Mammary epithelial cell (primary cell): ENCODE measurements at regions of chr5 and their contacts with region 1.

Region 1: GRCh38 chr5:71601222-71602041 is 14.3 kb downstream of the MCCC2 start:
- DNase-seq: peak; percentile 98
- H3K4me3 ChIP-seq: peak overlapping the region in 1 of 3 experiments; percentile 7
- H3K27ac ChIP-seq: peak overlapping the region; percentile 18
- H3K4me1 ChIP-seq: peaks cover 26% of the 10 kb centered on the region
- H3K27me3 ChIP-seq: no peaks in the 10 kb centered on the region
- CTCF ChIP-seq: peak; percentile 72 to 73

Region 2: DNA sequence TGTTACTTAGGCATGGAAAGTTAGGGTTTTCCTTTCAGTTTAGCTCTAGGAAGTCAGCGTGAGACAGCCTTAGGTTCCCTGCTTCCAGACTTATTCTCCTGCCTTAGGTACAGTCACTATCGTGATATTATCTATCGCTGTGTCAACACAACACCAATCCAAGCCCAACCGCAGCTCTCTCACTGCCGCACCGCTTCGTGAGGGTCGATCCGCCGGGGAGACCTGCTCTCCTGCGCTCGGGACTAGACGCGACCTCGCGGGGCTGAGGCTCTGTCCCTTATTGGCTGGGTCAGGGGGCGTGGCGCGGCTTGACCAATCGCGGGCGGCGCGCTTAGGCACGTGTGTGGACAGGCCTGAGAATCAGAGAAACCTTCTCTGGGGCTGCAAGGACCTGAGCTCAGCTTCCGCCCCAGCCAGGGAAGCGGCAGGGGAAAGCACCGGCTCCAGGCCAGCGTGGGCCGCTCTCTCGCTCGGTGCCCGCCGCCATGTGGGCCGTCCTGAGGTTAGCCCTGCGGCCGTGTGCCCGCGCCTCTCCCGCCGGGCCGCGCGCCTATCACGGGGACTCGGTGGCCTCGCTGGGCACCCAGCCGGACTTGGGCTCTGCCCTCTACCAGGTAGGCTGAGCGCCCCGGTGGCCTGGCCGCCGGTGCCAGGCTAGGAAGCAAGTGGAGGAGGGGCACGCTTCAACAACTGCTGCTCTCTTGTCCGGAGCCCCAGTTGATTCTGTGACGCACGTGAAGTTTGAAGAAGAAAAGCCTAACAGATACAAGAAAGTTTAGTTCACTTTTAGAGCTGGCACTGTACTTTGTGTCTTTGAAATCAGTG is 14.3 kb before region 1 on chr5 and contains the start of gene MCCC2:
- CTCF ChIA-PET with region 1: interaction called, 21 read pairs
- dilution Hi-C with region 1: no loop called
- in situ Hi-C with region 1: no loop called
- intact Hi-C with region 1: no loop called
- DNase-seq: peak; percentile 97
- H3K4me3 ChIP-seq: peak within 1 kb of the TSS; percentile 58 to 74 (median 73)
- H3K27ac ChIP-seq: peak within 1 kb of the TSS; percentile 78
- H3K4me1 ChIP-seq: peaks cover 13% of the 10 kb centered on the region
- H3K27me3 ChIP-seq: no peaks in the 10 kb centered on the region
- CTCF ChIP-seq: no peak
- total RNA-seq, gene MCCC2: 23.3 to 41.3 TPM